ENCODE measurements at regions of chr13 and their contacts with region 1.

Region 1: GRCh38 chr13:40770934-40771618 is at the start of gene MRPS31:
- DNase-seq: peak; percentile 91 to 97 (median 94)
- H3K4me3 ChIP-seq: peak within 1 kb of the TSS; percentile 76 to 88 (median 77)
- H3K4me3 Mint-ChIP-seq: peak within 1 kb of the TSS; percentile 99
- H3K27ac ChIP-seq: peak within 1 kb of the TSS; percentile 83 to 87
- H3K27ac Mint-ChIP-seq: peak within 1 kb of the TSS; percentile 92 to 99 (median 97)
- H3K4me1 ChIP-seq: peaks cover 12 to 24% of the 10 kb centered on the region in 2 donors
- H3K4me1 Mint-ChIP-seq: peaks cover 18% of the 10 kb centered on the region
- H3K27me3 ChIP-seq: no peaks in the 10 kb centered on the region
- H3K27me3 Mint-ChIP-seq: peaks cover 0 to 1% (median 0%) of the 10 kb centered on the region in 3 donors
- CTCF ChIP-seq: no peak
- polyA plus RNA-seq, gene MRPS31: 9.5 to 11.4 (median 11.3) TPM

Region 2: DNA sequence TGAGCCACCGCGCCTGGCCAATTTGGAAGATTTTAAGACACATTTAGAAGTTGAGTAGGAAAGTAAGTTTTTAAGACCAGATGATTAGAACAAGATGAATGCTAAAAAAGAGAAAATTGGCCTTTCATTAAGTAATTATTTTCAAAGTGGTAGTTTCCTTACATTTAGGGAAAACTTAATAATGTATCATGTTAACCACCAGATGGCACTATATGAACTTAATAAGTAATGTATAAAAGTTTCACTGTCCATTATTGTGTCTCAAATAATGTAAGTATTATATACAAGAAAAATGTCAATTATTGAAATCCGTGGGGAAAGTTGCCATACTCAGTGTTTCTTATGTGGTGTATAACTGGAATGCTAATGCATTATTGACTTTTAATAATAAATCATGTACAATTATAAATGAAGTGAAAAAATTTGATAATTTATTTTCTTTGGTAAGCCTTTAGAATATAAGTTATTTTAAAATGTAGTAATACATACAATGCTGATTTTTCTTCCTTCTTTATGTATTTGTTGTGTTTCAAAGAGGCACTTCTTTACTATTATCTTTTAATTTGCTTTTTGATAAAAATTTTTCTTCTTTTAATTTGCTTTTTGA is 1086.4 kb before region 1 on chr13:
- intact Hi-C with region 1: loop called in 1 of 2 experiments (anchors 10 kb)
- DNase-seq: peak in 2 of 3 donors; percentile 21 to 67
- H3K4me3 ChIP-seq: no peak overlapping the region
- H3K4me3 Mint-ChIP-seq: no peak overlapping the region
- H3K27ac ChIP-seq: no peak overlapping the region
- H3K27ac Mint-ChIP-seq: no peak overlapping the region
- H3K4me1 ChIP-seq: peaks cover 6 to 10% of the 10 kb centered on the region in 2 donors
- H3K4me1 Mint-ChIP-seq: peaks cover 11% of the 10 kb centered on the region
- H3K27me3 ChIP-seq: no peaks in the 10 kb centered on the region
- H3K27me3 Mint-ChIP-seq: no peaks in the 10 kb centered on the region
- CTCF ChIP-seq: peak; percentile 63

Region 3: GRCh38 chr13:40666045-40666904 is 104.8 kb before region 1 on chr13 and contains the start of gene FOXO1:
- intact Hi-C with region 1: loop called in 1 of 2 experiments (anchors 10 kb)
- DNase-seq: peak; percentile 74 to 79 (median 77)
- H3K4me3 ChIP-seq: peak within 1 kb of the TSS; percentile 88 to 96 (median 93)
- H3K4me3 Mint-ChIP-seq: peak within 1 kb of the TSS; percentile 96 to 97
- H3K27ac ChIP-seq: peak within 1 kb of the TSS; percentile 52 to 80
- H3K27ac Mint-ChIP-seq: peak within 1 kb of the TSS; percentile 81 to 94 (median 92)
- H3K4me1 ChIP-seq: peaks cover 17 to 34% of the 10 kb centered on the region in 2 donors
- H3K4me1 Mint-ChIP-seq: peaks cover 36% of the 10 kb centered on the region
- H3K27me3 ChIP-seq: peaks cover 11 to 23% of the 10 kb centered on the region in 2 donors
- H3K27me3 Mint-ChIP-seq: peaks cover 14 to 23% (median 19%) of the 10 kb centered on the region in 3 donors
- CTCF ChIP-seq: no peak
- polyA plus RNA-seq, gene FOXO1: 3.1 to 11.3 (median 8.0) TPM

Region 4: DNA sequence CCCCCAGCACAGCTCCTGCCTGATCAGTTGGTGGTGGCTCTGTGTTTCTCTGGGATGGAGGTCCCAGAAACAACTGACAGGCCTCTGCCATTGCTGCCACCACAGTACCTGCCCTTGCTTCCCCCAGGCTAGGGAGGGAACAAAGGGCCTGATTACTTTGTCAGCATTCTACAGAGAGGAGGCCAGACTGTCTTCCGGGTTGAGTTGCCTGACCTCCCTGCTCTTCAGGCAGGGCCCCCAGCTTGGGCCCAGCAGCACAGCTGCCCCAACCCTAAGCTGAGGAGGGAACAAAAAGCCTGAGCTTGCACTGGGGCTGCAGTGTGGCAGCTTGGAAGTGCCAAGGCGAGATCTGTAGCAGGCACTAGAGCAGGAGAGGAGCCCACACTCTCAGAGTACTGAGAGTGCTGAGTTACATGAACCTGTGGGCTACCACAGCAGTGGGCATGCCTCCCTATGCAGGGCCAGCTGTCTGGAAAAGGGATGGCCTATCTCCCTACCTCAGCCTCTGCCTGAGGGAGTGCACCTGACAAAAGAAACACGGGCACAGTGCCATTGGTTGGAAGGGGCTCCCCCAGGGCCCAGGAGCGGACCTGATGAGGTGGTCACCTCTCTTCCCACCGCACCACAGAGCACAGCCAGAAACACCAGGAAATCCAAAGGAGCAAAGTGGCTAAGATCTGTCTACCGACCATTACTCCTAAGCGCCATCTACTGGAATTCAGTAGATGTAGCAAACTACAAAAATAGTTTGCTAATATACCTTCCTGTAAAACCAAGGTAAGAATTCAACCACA is 42.8 kb after region 1 on chr13:
- intact Hi-C with region 1: loop called in 1 of 2 experiments (anchors 5 kb)
- DNase-seq: peak; percentile 15 to 60 (median 44)
- H3K4me3 ChIP-seq: no peak overlapping the region
- H3K4me3 Mint-ChIP-seq: no peak overlapping the region
- H3K27ac ChIP-seq: peak overlapping the region in 1 of 2 donors; percentile 28
- H3K27ac Mint-ChIP-seq: no peak overlapping the region
- H3K4me1 ChIP-seq: peaks cover 14% of the 10 kb centered on the region in 2 donors
- H3K4me1 Mint-ChIP-seq: peaks cover 19% of the 10 kb centered on the region
- H3K27me3 ChIP-seq: no peaks in the 10 kb centered on the region
- H3K27me3 Mint-ChIP-seq: no peaks in the 10 kb centered on the region
- CTCF ChIP-seq: peak; percentile 86

Region 5: DNA sequence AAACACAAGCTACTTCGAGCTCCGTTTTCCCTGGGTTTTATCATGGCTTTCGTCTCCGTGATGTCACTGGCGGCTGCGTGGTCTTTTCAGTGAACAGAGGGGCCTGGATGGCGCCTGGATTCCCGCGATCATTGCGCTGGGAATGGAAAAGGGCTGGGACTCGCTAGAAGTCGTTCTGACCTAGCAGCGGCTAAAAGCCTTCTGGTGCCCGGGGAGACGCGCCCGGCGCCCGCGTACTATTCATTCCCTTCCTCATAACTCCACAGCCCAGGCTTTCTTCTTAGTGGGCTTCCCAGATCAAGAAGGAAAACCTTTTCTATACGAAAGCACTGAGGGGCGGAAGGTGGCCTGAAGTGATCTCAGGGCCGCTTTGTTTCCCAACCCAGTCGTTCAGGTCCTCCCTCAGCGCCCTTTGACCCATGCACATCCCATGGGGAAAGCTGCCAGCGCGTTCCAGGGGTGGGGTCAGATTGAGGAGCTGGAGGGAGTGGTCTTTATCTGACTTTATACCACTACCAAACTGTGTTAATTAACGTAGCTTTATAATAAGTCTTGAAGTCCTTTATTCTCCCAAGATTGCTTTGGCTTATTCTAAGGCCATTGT is 151.5 kb after region 1 on chr13:
- intact Hi-C with region 1: loop called in 1 of 2 experiments (anchors 10 kb)
- DNase-seq: no peak
- H3K4me3 ChIP-seq: no peak overlapping the region
- H3K4me3 Mint-ChIP-seq: peak overlapping the region; percentile 35 to 58
- H3K27ac ChIP-seq: no peak overlapping the region
- H3K27ac Mint-ChIP-seq: peak overlapping the region in 4 of 7 donors; percentile 43 to 68 (median 58)
- H3K4me1 ChIP-seq: peaks cover 11 to 18% of the 10 kb centered on the region in 2 donors
- H3K4me1 Mint-ChIP-seq: peaks cover 21% of the 10 kb centered on the region
- H3K27me3 ChIP-seq: no peaks in the 10 kb centered on the region
- H3K27me3 Mint-ChIP-seq: peaks cover 0 to 2% (median 0%) of the 10 kb centered on the region in 3 donors
- CTCF ChIP-seq: no peak

Region 6: DNA sequence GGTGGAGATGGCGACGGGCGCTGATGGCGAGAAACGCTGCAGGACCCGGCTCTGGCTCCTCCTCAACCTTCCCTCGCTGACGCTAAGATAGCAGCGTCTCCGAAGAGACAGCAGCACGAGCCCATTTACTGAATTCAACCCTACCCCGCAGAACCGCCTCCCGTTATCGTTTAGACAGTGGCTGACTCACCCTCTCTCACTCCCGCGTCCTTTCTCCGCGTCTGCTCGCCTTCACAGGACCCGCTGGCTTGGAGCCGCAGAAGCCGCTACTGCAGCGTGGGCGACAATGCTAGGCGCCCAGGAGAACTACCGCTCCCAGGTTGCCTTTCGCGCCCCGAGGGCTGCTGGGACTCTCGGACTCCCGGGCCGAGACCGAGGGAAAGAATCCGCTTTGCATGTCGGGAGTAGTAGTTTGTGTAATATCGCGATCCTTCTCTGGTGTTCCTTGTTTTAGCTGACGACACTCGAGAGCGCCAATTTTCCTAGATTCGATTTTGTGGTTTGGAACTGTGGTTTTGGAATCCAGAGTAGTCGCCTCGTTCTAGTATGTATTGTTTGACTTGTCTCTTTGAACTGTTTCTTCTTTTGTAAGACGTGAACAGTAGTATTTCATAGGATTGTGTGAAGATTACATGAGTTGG is 361.6 kb after region 1 on chr13 and contains the start of gene KBTBD6:
- intact Hi-C with region 1: loop called in 1 of 2 experiments (anchors 5 kb)
- DNase-seq: peak; percentile 92 to 96 (median 94)
- H3K4me3 ChIP-seq: peak within 1 kb of the TSS; percentile 60 to 82 (median 65)
- H3K4me3 Mint-ChIP-seq: peak within 1 kb of the TSS; percentile 97 to 99
- H3K27ac ChIP-seq: peak within 1 kb of the TSS; percentile 51 to 87
- H3K27ac Mint-ChIP-seq: peak within 1 kb of the TSS; percentile 84 to 91 (median 89)
- H3K4me1 ChIP-seq: peaks cover 12 to 28% of the 10 kb centered on the region in 2 donors
- H3K4me1 Mint-ChIP-seq: peaks cover 37% of the 10 kb centered on the region
- H3K27me3 ChIP-seq: no peaks in the 10 kb centered on the region
- H3K27me3 Mint-ChIP-seq: no peaks in the 10 kb centered on the region
- CTCF ChIP-seq: no peak
- polyA plus RNA-seq, gene KBTBD6: 0.37 to 1.2 (median 0.54) TPM

Region 7: DNA sequence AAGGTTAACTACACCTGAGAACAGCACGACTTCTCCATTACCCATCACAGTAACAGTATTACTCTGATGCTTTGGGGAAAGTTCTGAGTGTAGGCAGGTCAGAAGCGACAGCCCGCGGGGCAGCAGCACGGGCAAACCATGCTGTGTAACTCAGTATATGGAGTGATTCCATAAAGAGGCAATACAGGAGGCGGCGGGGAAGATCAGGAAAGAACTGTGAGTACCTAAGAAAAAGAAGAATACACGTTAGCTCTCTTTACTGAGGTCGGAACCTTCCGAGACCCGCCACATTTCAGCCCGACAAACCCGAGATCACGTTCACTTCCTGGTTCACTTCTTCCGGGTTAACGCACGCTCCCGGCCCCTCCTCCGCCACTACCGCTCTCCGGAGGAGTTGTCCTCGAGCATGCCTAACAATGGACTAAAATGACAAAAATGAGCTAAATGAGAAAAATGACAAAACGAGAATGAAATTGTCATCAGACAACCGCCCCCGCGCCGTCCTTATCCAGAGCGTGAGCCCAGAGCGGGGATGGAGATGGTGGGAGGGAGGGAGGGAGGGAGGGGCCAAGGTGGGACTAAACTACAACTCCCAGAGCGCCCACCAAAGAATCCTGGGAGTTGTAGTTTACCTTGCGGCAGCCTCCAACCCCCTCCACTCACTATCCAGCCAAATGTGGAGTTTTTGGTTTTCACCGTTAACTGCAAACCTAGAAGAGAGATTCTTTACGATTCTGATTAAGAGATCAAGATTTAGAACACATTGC is 492.4 kb after region 1 on chr13 and contains the start of gene MTRF1:
- intact Hi-C with region 1: loop called in 1 of 2 experiments (anchors 10 kb)
- DNase-seq: peak; percentile 65 to 76 (median 71)
- H3K4me3 ChIP-seq: peak within 1 kb of the TSS; percentile 55 to 98 (median 97)
- H3K4me3 Mint-ChIP-seq: peak within 1 kb of the TSS; percentile 92 to 97
- H3K27ac ChIP-seq: peak within 1 kb of the TSS; percentile 59 to 95
- H3K27ac Mint-ChIP-seq: peak within 1 kb of the TSS; percentile 91 to 99 (median 96)
- H3K4me1 ChIP-seq: peaks cover 6 to 8% of the 10 kb centered on the region in 2 donors
- H3K4me1 Mint-ChIP-seq: peaks cover 15% of the 10 kb centered on the region
- H3K27me3 ChIP-seq: no peaks in the 10 kb centered on the region
- H3K27me3 Mint-ChIP-seq: peaks cover 0 to 4% (median 0%) of the 10 kb centered on the region in 3 donors
- CTCF ChIP-seq: no peak
- polyA plus RNA-seq, gene MTRF1: 4.0 to 17.2 (median 6.0) TPM

Measured in CD14-positive monocyte (primary cell).